CD8-positive, alpha-beta T cell (primary cell): ENCODE measurements at regions of chr16 and their contacts with region 1.

Region 1: DNA sequence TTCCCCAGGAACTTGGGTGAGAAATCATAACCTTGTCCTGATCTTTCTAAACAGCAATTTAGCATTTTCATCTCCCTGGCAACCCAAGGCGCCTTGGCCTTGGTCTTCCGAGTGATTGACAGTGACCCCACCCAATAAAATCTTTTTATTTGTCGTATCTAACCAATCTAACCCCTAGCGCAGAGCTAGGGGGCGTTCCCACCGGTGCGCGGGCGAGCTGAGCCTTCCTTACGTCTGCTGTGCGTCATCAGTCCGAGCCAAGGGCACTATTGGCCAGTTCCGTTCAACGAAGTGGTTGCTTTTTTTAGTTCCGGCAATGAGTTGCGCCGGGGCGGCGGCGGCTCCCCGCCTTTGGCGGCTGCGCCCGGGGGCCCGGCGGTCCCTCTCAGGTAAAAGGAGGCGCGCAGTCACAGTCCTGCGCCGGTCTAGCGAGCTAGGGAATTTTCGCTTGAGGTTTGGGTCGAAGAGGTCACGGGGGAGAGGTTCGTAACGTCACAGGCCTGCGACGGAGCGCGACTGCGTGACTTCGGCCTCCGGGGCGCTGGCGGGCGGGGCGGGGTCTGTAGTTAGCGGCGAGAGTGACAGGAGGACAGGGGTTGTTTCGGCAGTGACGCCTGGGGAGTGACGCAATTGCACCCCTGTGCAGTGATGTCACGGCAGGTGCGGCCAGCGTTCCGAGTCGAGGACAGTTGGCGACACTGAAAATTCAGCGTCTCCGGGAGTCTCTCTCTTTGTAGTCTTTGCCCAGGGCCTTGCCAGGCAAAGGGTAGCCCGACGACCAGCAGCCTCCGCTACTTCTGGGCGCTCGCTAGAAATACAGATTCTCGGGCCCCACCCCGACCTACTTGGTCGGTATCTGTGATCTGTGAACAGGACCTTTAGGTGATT is at the start of gene COQ7:
- DNase-seq: peak; percentile 95 to 100 (median 98)
- ATAC-seq: peak; percentile 85
- H3K4me3 ChIP-seq: peak within 1 kb of the TSS; percentile 76 to 85
- H3K4me3 Mint-ChIP-seq: peak within 1 kb of the TSS; percentile 92
- H3K27ac ChIP-seq: peak within 1 kb of the TSS; percentile 100
- H3K27ac Mint-ChIP-seq: peak within 1 kb of the TSS; percentile 100
- H3K4me1 ChIP-seq: peaks cover 11% of the 10 kb centered on the region
- H3K4me1 Mint-ChIP-seq: peaks cover 23% of the 10 kb centered on the region
- H3K27me3 ChIP-seq: no peaks in the 10 kb centered on the region
- H3K27me3 Mint-ChIP-seq: no peaks in the 10 kb centered on the region
- CTCF ChIP-seq: no peak
- total RNA-seq, gene COQ7: 10.9 to 11.7 TPM

Region 2: GRCh38 chr16:17467923-17468540 is 1599.6 kb before region 1 on chr16:
- CTCF ChIA-PET with region 1: no interaction called
- POLR2A ChIA-PET with region 1: no interaction called
- intact Hi-C with region 1: loop called in 1 of 2 experiments (anchors 10 kb)
- DNase-seq: peak in 6 of 9 experiments; percentile 41 to 69 (median 54)
- ATAC-seq: no peak
- H3K4me3 ChIP-seq: no peak overlapping the region
- H3K4me3 Mint-ChIP-seq: peak overlapping the region; percentile 93
- H3K27ac ChIP-seq: no peak overlapping the region
- H3K27ac Mint-ChIP-seq: no peak overlapping the region
- H3K4me1 ChIP-seq: peaks cover 32% of the 10 kb centered on the region
- H3K4me1 Mint-ChIP-seq: peaks cover 45% of the 10 kb centered on the region
- H3K27me3 ChIP-seq: no peaks in the 10 kb centered on the region
- H3K27me3 Mint-ChIP-seq: no peaks in the 10 kb centered on the region
- CTCF ChIP-seq: peak; percentile 25

Region 3: GRCh38 chr16:18801197-18801972 is 266.2 kb before region 1 on chr16 and contains the start of gene ARL6IP1:
- CTCF ChIA-PET with region 1: no interaction called
- POLR2A ChIA-PET with region 1: no interaction called
- intact Hi-C with region 1: loop called (anchors 1 to 5 kb)
- DNase-seq: peak; percentile 96 to 100 (median 99)
- ATAC-seq: peak; percentile 94
- H3K4me3 ChIP-seq: peak within 1 kb of the TSS; percentile 86 to 98
- H3K4me3 Mint-ChIP-seq: peak within 1 kb of the TSS; percentile 97
- H3K27ac ChIP-seq: peak within 1 kb of the TSS; percentile 84 to 92
- H3K27ac Mint-ChIP-seq: peak within 1 kb of the TSS; percentile 97
- H3K4me1 ChIP-seq: peaks cover 44% of the 10 kb centered on the region
- H3K4me1 Mint-ChIP-seq: peaks cover 50% of the 10 kb centered on the region
- H3K27me3 ChIP-seq: no peaks in the 10 kb centered on the region
- H3K27me3 Mint-ChIP-seq: no peaks in the 10 kb centered on the region
- CTCF ChIP-seq: peak; percentile 75
- total RNA-seq, gene ARL6IP1: 137 to 138 TPM

Region 4: GRCh38 chr16:18969050-18969854 is 98.3 kb before region 1 on chr16:
- CTCF ChIA-PET with region 1: no interaction called
- POLR2A ChIA-PET with region 1: no interaction called
- intact Hi-C with region 1: no loop called
- DNase-seq: peak; percentile 58 to 89 (median 76)
- ATAC-seq: peak; percentile 81
- H3K4me3 ChIP-seq: no peak overlapping the region
- H3K4me3 Mint-ChIP-seq: no peak overlapping the region
- H3K27ac ChIP-seq: no peak overlapping the region
- H3K27ac Mint-ChIP-seq: no peak overlapping the region
- H3K4me1 ChIP-seq: no peaks in the 10 kb centered on the region
- H3K4me1 Mint-ChIP-seq: peaks cover 5% of the 10 kb centered on the region
- H3K27me3 ChIP-seq: no peaks in the 10 kb centered on the region
- H3K27me3 Mint-ChIP-seq: no peaks in the 10 kb centered on the region
- CTCF ChIP-seq: peak; percentile 97

Region 5: GRCh38 chr16:19138601-19139000 is 71.0 kb after region 1 on chr16:
- CTCF ChIA-PET with region 1: no interaction called
- POLR2A ChIA-PET with region 1: no interaction called
- intact Hi-C with region 1: no loop called
- DNase-seq: no peak
- ATAC-seq: no peak
- H3K4me3 ChIP-seq: no peak overlapping the region
- H3K4me3 Mint-ChIP-seq: no peak overlapping the region
- H3K27ac ChIP-seq: no peak overlapping the region
- H3K27ac Mint-ChIP-seq: no peak overlapping the region
- H3K4me1 ChIP-seq: no peaks in the 10 kb centered on the region
- H3K4me1 Mint-ChIP-seq: no peaks in the 10 kb centered on the region
- H3K27me3 ChIP-seq: no peaks in the 10 kb centered on the region
- H3K27me3 Mint-ChIP-seq: peaks cover 7% of the 10 kb centered on the region
- CTCF ChIP-seq: no peak

Region 6: GRCh38 chr16:19521471-19522396 is 454.1 kb after region 1 on chr16 and contains the start of gene GDE1:
- CTCF ChIA-PET with region 1: no interaction called
- POLR2A ChIA-PET with region 1: interaction called, 9 read pairs
- intact Hi-C with region 1: loop called (anchors 1 kb)
- DNase-seq: peak; percentile 76 to 96 (median 92)
- ATAC-seq: peak; percentile 74
- H3K4me3 ChIP-seq: peak within 1 kb of the TSS; percentile 62 to 85
- H3K4me3 Mint-ChIP-seq: peak within 1 kb of the TSS; percentile 93
- H3K27ac ChIP-seq: peak within 1 kb of the TSS; percentile 67 to 77
- H3K27ac Mint-ChIP-seq: peak within 1 kb of the TSS; percentile 92
- H3K4me1 ChIP-seq: peaks cover 32% of the 10 kb centered on the region
- H3K4me1 Mint-ChIP-seq: peaks cover 61% of the 10 kb centered on the region
- H3K27me3 ChIP-seq: no peaks in the 10 kb centered on the region
- H3K27me3 Mint-ChIP-seq: no peaks in the 10 kb centered on the region
- CTCF ChIP-seq: peak; percentile 22
- total RNA-seq, gene GDE1: 26.2 to 29.0 TPM

Region 7: DNA sequence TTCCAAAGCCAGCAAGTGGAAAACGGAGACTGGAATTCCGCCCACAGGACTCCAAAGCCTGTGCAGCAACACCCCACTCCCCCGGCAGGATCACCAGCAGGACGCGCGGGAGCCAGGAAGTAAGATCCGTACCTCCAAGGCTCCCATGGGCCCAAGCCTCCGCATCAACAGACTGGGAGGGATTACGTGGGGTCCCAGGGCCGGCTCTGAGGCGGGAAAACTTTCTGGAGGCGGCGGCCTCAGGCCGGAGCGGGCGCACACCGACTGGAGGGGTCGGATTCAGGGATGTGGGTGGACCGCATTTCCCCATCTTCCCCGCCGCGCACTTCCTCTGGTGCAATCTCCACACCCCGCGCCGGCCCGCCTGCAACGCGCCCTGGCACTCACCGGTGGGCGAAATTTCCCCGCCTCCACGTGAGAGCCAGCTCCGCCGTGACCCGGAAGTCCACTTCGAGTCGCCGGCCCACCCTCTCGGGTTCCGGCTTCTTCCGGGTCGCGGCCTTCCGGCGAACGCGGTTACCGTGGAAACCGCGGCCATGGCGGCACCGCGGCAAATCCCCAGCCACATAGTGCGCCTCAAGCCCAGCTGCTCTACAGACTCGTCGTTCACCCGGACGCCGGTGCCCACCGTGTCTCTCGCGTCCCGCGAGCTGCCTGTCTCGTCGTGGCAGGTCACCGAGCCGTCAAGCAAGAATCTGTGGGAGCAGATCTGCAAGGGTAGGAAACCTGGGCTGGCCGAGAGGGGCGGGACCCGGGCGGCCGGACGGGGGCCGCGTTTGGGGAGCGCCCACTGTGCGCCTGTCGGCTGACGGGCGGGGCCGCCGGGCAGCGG is 650.4 kb after region 1 on chr16 and contains the starts of genes IQCK and KNOP1:
- CTCF ChIA-PET with region 1: no interaction called
- POLR2A ChIA-PET with region 1: no interaction called
- intact Hi-C with region 1: loop called in 1 of 2 experiments (anchors 5 kb)
- DNase-seq: peak; percentile 72 to 97 (median 86)
- ATAC-seq: peak; percentile 89
- H3K4me3 ChIP-seq: peak within 1 kb of the TSS; percentile 80 to 95
- H3K4me3 Mint-ChIP-seq: peak within 1 kb of the TSS; percentile 91
- H3K27ac ChIP-seq: peak within 1 kb of the TSS; percentile 49 to 64
- H3K27ac Mint-ChIP-seq: peak within 1 kb of the TSS; percentile 71
- H3K4me1 ChIP-seq: peaks cover 6% of the 10 kb centered on the region
- H3K4me1 Mint-ChIP-seq: peaks cover 32% of the 10 kb centered on the region
- H3K27me3 ChIP-seq: no peaks in the 10 kb centered on the region
- H3K27me3 Mint-ChIP-seq: no peaks in the 10 kb centered on the region
- CTCF ChIP-seq: no peak
- total RNA-seq, gene IQCK: 0.72 to 2.1 TPM
- total RNA-seq, gene KNOP1: 3.4 to 3.6 TPM